Mammary epithelial cell (primary cell): ENCODE measurements at regions of chr5 and their contacts with region 1.

Region 1: GRCh38 chr5:138575194-138576015 is at the start of gene HSPA9:
- DNase-seq: peak; percentile 99
- H3K4me3 ChIP-seq: peak within 1 kb of the TSS; percentile 81 to 95 (median 91)
- H3K27ac ChIP-seq: peak within 1 kb of the TSS; percentile 100
- H3K4me1 ChIP-seq: peaks cover 10% of the 10 kb centered on the region
- H3K27me3 ChIP-seq: no peaks in the 10 kb centered on the region
- CTCF ChIP-seq: peak in 1 of 2 donors; percentile 14
- total RNA-seq, gene HSPA9: 301 to 332 TPM

Region 2: GRCh38 chr5:138559937-138560336 is 15.5 kb before region 1 on chr5:
- CTCF ChIA-PET with region 1: no interaction called
- dilution Hi-C with region 1: no loop called
- in situ Hi-C with region 1: no loop called
- intact Hi-C with region 1: no loop called
- DNase-seq: no peak
- H3K4me3 ChIP-seq: no peak overlapping the region
- H3K27ac ChIP-seq: no peak overlapping the region
- H3K4me1 ChIP-seq: no peaks in the 10 kb centered on the region
- H3K27me3 ChIP-seq: no peaks in the 10 kb centered on the region
- CTCF ChIP-seq: no peak

Region 3: DNA sequence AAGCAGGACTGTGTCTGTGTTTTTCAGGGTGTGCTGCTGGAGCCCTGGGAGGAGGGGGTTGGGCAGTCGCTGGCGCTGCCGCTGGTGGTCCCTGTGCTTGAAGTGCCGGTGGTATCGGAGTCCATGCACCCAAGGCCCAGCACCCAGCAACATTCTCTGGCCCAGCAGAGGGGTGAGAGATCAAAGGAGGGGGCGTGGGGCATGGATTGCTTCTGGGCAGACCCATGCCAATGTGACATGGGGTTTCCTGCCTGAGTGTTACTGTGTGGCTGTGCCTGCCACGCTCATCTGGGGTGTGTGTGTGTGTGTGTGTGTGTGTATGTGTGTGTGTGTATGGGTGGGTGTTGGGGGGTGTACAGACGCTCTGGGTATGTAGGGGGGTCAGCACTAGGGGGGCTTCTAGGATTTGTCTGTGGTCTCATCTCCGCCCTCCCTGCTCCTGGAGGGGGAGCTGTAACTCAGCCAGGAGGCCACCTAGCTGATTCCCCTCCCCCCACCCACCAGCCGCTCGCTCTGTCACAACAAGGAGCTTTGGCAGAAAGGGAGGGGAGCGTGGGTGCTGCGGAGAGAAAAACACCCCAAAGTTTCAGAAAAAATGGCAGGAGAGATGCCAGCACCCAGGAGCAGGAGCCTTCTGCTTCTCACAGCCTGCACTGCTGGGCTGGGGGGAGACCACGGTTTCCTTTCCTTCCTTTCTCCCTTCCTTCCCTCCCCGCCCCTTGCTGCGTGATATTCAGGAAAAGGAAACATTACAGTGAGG is 35.7 kb after region 1 on chr5:
- CTCF ChIA-PET with region 1: interaction called, 7 read pairs
- dilution Hi-C with region 1: no loop called
- in situ Hi-C with region 1: no loop called
- intact Hi-C with region 1: loop called (anchors 1 kb)
- DNase-seq: no peak
- H3K4me3 ChIP-seq: no peak overlapping the region
- H3K27ac ChIP-seq: no peak overlapping the region
- H3K4me1 ChIP-seq: peaks cover 34% of the 10 kb centered on the region
- H3K27me3 ChIP-seq: no peaks in the 10 kb centered on the region
- CTCF ChIP-seq: no peak

Region 4: DNA sequence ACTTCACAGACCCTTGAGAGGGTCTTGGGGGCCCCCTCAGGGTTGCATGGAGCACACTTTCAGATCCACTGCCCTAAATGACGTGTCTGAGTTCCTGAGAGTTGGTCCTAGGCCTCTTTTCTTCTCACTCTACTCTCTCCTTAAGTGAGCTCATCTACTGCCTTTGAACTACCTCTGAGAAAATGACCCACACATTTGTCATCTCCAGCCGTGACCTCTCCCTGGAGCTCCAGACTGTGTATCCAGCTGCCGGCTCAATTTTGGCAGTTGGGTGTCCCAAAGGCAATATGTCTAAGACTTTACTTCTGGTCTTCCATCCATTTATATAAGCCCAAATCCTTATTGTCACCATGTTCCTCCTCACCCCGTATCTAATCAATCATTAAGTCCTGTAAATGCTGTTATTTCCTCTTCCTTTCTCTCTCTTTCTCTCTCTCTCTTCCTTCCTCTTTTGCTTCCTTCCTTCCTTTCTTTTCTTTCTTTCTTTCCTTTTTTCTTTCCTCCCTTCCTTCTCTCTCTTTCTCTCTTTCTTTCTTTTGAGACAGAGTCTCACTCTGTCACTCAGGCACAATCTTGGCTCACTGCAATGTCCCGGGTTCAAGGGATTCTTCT is 51.0 kb after region 1 on chr5:
- CTCF ChIA-PET with region 1: no interaction called
- dilution Hi-C with region 1: no loop called
- in situ Hi-C with region 1: no loop called
- intact Hi-C with region 1: no loop called
- DNase-seq: no peak
- H3K4me3 ChIP-seq: no peak overlapping the region
- H3K27ac ChIP-seq: no peak overlapping the region
- H3K4me1 ChIP-seq: no peaks in the 10 kb centered on the region
- H3K27me3 ChIP-seq: no peaks in the 10 kb centered on the region
- CTCF ChIP-seq: no peak

Region 5: DNA sequence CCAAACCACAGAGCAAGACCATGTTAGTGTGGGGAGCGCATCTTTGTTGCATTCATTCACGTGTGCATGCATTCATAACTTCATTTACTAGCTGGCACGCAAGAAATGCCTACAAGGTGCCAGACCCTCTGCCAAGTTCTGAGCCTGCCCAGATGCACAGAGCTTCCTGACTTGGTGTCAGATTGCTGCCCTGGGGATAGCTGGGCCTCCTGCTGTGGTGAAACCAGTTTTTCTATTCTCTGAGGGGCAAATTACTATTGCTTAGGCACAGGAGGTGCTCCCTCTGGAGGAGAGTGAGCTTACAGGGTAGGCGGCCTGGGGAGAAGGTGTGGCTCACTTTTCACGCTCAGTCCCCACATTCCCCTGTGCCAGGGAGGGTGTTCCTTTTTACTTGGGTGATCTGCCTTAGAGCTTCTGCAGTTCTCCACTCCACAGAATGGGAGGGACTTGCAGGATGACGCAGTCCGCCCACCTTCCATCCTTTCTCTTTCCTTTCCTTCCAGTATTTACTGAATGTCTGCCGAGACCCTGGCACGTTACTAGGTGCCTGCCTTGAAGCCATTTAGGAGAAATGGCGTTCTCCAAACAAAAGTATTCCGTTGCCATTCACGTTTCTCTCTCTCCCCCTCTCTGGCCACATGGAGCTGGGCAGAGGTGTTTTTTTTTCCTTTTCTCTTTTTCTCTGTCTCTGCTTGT is 149.9 kb after region 1 on chr5:
- CTCF ChIA-PET with region 1: no interaction called
- dilution Hi-C with region 1: no loop called
- in situ Hi-C with region 1: no loop called
- intact Hi-C with region 1: loop called (anchors 1 kb)
- DNase-seq: peak; percentile 97
- H3K4me3 ChIP-seq: peak overlapping the region in 1 of 3 experiments; percentile 25
- H3K27ac ChIP-seq: peak overlapping the region; percentile 91
- H3K4me1 ChIP-seq: peaks cover 23% of the 10 kb centered on the region
- H3K27me3 ChIP-seq: no peaks in the 10 kb centered on the region
- CTCF ChIP-seq: peak; percentile 78 to 87

Region 6: GRCh38 chr5:139273572-139274289 is 698.3 kb after region 1 on chr5:
- CTCF ChIA-PET with region 1: no interaction called
- dilution Hi-C with region 1: no loop called
- in situ Hi-C with region 1: loop called (anchors 25 kb)
- intact Hi-C with region 1: no loop called
- DNase-seq: peak; percentile 87
- H3K4me3 ChIP-seq: peak overlapping the region; percentile 65 to 87 (median 81)
- H3K27ac ChIP-seq: peak overlapping the region; percentile 81
- H3K4me1 ChIP-seq: peaks cover 51% of the 10 kb centered on the region
- H3K27me3 ChIP-seq: no peaks in the 10 kb centered on the region
- CTCF ChIP-seq: peak in 1 of 2 donors; percentile 12